Sigmoid colon (tissue), 7 donors: ENCODE measurements at regions of chr14 and their contacts with region 1.

Region 1: GRCh38 chr14:68795597-68796417 is 2.9 kb upstream of the ZFP36L1 start:
- DNase-seq: peak; percentile 95
- H3K4me3 ChIP-seq: peak overlapping the region; percentile 76 to 88 (median 80)
- H3K27ac ChIP-seq: peak overlapping the region; percentile 98 to 100 (median 99)
- H3K4me1 ChIP-seq: peaks cover 0 to 18% (median 9%) of the 10 kb centered on the region in 4 donors
- H3K27me3 ChIP-seq: no peaks in the 10 kb centered on the region
- CTCF ChIP-seq: peak in 3 of 4 experiments; percentile 87 to 97 (median 95)
- EP300 ChIP-seq: peak; percentile 2 to 57 (median 48)
- POLR2A ChIP-seq: peak; percentile 84 to 90

Region 2: GRCh38 chr14:68392393-68393141 is 403.2 kb before region 1 on chr14:
- intact Hi-C with region 1: loop called (anchors 5 kb)
- DNase-seq: peak; percentile 86
- H3K4me3 ChIP-seq: no peak overlapping the region
- H3K27ac ChIP-seq: peak overlapping the region; percentile 65 to 77 (median 75)
- H3K4me1 ChIP-seq: peaks cover 0 to 87% (median 64%) of the 10 kb centered on the region in 4 donors
- H3K27me3 ChIP-seq: no peaks in the 10 kb centered on the region
- CTCF ChIP-seq: no peak
- EP300 ChIP-seq: no peak
- POLR2A ChIP-seq: no peak

Region 3: DNA sequence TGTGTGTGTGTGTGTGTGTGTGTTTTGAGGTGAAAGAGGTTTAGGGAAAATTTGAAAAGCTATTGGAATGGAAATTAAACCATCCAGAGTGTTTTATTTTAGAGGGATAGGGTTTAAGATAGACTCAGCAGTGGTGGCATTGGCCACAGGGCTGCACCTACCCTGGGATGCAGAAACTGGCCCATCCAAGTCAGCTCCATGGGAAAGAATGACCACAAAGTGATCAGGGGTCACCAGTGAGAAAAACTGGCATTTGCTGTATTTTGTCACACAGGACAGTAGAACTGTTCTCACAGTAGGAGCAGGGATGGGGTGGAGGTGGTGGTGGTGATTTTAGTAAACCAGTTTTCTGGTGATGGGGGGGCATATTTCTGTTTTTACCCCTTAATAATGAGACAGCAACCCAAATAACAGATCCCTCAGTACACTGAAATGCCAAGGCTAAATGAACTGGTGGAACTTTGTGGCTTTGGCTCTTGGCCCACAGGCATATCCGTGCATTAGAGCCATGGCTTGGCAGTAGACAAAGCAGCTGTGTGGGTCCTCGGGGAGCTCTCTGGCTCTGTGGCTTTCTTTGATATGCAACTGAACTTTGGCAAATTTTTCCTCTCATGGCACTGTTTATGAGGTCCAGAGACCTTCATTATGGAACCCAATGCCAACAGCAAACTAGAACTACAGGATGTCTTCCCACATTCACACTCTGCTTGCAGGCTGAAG is 351.2 kb before region 1 on chr14:
- intact Hi-C with region 1: loop called (anchors 5 kb)
- DNase-seq: no peak
- H3K4me3 ChIP-seq: no peak overlapping the region
- H3K27ac ChIP-seq: peak overlapping the region in 2 of 4 donors; percentile 17 to 22
- H3K4me1 ChIP-seq: peaks cover 2 to 68% (median 43%) of the 10 kb centered on the region in 4 donors
- H3K27me3 ChIP-seq: no peaks in the 10 kb centered on the region
- CTCF ChIP-seq: no peak
- EP300 ChIP-seq: no peak
- POLR2A ChIP-seq: no peak

Region 4: DNA sequence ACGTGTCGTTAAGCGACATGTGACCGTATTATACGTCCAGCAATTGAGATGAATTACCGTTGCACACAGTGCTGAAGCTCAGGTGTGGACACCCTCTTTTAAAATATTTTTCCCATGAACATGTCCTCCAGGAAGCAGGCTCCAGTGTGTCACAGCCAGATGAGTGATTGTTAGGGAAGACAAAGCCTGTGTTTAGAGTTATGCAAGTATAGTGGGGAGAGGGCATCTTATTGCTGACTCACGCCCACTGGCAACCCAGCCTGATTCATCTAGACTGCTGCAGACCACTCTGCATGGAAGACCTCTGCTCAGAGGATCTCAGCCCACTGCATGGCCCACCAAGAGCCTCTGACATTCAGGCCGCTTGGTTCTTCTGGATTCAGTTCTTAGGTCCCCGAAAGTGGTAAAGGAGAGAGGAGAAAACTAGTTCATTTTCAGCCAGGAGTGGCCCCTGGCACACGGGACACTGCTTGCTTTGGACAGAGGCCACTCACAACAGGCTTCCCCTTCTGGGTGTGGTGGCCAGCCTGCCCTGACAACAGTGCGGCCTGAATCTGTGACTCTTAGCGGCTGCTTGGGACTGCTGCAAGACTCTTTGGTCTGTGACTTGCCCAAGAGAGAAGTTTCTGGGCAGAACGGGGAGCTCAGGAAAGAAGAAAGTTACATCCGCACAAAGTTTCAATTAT is 269.2 kb before region 1 on chr14:
- intact Hi-C with region 1: loop called (anchors 5 kb)
- DNase-seq: no peak
- H3K4me3 ChIP-seq: no peak overlapping the region
- H3K27ac ChIP-seq: peak overlapping the region; percentile 49 to 73 (median 66)
- H3K4me1 ChIP-seq: peaks cover 0 to 52% (median 38%) of the 10 kb centered on the region in 4 donors
- H3K27me3 ChIP-seq: no peaks in the 10 kb centered on the region
- CTCF ChIP-seq: no peak
- EP300 ChIP-seq: no peak
- POLR2A ChIP-seq: no peak

Region 5: DNA sequence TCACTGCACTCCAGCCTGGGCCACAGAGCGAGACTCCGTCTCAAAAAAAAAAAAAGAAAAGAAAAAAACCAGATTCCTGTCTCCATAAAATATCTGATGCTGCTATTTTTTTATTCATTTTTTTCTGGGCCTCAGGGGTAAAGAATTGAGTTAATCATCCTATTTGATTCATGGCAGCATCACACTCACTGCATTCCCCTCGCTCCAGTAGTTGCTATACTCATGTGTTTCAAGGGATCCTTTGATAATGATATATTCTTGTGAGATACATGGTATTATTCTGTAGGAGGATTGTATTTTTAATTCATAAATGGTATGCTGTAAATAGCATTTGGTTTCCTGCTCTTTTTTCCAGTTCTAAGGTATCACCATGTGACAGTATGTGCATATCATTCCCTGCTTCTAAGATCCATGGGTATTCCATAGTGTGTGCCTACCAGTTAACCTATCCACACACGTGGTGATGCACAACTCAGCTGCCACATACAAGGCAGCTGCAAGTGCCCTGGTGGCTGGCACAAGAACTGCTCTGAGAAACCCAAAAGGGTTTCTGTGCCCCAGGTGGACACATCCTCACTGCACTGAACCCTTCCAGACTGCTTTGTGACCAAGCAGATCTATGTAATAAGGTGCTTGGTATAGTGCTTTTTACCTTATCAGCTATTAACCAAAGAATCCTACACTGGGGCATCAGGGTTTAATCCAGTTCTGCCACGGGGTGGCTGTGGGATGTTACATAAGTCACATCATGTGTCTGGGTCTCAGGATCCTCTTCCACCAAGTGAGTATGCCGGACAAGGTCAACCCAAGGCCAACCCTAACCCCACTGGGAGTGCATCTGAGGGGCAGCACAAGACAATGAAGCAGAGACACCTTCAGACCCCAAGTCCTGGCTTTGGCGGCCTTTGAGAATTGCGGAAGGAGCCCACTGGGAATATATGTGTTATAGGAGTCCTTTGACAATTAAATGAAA is 77.5 kb before region 1 on chr14:
- intact Hi-C with region 1: no loop called
- DNase-seq: peak; percentile 46
- H3K4me3 ChIP-seq: no peak overlapping the region
- H3K27ac ChIP-seq: no peak overlapping the region
- H3K4me1 ChIP-seq: peaks cover 0 to 9% (median 0%) of the 10 kb centered on the region in 4 donors
- H3K27me3 ChIP-seq: no peaks in the 10 kb centered on the region
- CTCF ChIP-seq: peak in 1 of 4 experiments; percentile 18
- EP300 ChIP-seq: no peak
- POLR2A ChIP-seq: no peak

Region 6: DNA sequence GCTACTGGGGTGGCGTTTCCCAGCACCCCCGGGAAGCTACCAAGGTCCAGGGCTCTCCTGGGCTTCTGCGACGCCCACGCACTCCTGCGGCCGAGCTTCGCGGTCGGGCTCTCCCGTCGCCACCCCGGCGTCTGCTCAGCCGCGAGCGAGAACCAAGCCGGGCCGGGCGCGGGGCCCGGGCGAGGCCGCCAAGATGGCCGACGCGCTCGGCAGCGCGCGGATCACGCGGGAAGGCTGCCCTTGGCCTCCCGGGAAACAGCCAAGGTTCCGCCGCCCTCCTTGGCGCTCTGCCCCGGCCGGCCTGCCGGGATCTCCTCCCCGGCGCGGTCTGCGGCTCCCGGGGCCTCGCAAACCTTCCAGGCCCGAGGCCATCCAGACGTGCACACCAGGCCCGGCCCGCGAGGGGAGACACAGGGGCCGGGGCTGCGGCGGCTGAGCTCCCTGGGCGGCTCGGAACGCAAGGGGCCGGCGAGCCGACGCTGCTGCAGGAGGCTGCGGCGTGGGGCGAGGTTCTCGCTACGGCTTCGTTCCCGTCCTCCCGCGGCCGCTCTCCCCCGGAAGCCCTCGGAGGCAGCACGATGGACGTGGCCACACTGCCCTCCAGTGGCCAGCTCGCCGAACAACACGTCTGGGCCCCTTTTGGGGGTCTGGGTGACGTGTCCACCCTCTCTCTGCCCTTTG is 20.6 kb after region 1 on chr14:
- intact Hi-C with region 1: loop called (anchors 2 kb)
- DNase-seq: peak; percentile 96
- H3K4me3 ChIP-seq: peak overlapping the region; percentile 35 to 52 (median 50)
- H3K27ac ChIP-seq: peak overlapping the region; percentile 93 to 99 (median 96)
- H3K4me1 ChIP-seq: peaks cover 0 to 77% (median 69%) of the 10 kb centered on the region in 4 donors
- H3K27me3 ChIP-seq: no peaks in the 10 kb centered on the region
- CTCF ChIP-seq: peak; percentile 92 to 99 (median 98)
- EP300 ChIP-seq: peak in 1 of 4 donors; percentile 47
- POLR2A ChIP-seq: peak; percentile 15 to 38

Region 7: DNA sequence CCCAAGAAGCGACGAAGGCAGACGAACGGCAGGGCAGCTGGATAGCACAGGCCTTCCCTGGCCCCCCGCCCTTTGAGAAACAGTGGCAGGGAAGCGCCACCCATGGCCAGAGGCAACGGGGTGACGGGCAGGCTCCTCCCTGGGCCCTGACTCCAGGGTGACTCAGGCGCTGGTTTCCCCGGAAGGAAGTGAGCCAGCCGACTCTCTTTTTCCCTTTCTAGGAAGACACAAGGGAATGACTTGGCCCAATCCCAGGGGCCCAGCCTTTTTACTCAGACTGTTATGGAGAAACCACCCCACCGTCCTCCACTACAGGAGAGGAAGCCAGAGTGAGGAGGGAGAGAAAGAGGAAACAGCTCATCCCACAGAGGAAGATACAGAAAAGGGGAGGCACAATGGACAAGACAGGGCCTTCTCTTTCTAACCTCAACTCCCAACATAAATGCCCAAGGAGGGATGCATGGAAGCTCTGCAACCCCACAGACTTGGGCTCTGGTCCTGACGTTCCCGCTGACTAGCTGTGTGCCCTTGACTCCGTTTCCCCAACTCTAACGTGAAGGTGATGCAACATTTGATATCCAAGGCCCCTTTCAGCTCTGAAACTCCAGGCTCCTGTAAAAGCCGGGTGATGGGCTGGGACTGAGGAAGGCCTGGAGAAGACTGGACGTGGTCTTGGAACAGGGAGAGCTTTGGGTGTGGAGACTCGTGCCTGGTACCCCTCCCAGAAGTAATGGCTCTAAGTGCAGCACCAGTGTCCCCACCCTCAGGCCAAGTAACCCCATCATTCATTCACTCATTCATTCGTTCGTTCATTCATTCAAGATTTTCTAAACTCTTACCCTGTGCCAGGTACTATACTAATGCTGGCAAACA is 155.5 kb after region 1 on chr14:
- intact Hi-C with region 1: loop called (anchors 10 kb)
- DNase-seq: peak; percentile 99
- H3K4me3 ChIP-seq: peak overlapping the region in 3 of 4 donors; percentile 35 to 41 (median 40)
- H3K27ac ChIP-seq: peak overlapping the region; percentile 98 to 100 (median 100)
- H3K4me1 ChIP-seq: peaks cover 0 to 99% (median 98%) of the 10 kb centered on the region in 4 donors
- H3K27me3 ChIP-seq: no peaks in the 10 kb centered on the region
- CTCF ChIP-seq: no peak
- EP300 ChIP-seq: peak in 2 of 4 donors; percentile 23 to 63
- POLR2A ChIP-seq: no peak